Head of caudate nucleus (tissue), 42 donors: ENCODE measurements at regions of chr6 and their contacts with region 1.

Region 1: DNA sequence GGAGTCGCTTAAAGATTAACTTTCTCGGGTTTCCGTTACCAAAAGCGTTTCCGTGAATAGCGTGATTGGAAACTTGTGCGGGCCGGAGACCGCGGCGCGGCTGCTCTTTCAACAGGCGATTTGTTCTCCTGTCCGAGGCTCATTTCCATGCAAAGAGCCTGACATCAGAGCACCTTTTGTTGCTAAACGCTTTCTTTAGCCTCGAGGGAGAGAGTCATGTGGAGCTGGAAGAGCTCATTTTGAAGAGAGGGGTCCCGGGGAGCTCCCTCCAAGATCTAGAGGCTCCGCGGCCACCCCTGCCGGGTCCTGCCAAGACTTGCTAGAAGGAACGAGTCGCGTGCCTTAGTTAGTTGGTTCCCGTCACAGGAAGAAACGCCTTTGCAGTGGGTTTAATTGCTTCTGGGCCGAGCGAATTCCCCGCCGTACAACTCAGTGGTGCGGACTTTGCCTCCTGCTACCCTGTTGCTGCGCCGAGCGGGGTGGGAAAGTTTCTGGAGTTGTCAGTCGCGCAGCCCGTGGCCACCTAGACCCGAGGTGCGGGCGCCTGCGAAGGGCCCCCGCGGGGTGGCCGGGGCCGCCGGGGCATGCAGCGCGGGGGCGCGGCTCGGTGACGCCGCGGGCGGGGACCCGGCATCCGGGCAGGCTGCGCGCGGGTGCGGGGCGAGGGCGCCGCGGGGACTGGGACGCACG is at the start of gene SASH1:
- DNase-seq: peak; percentile 51 to 90 (median 77)

Region 2: DNA sequence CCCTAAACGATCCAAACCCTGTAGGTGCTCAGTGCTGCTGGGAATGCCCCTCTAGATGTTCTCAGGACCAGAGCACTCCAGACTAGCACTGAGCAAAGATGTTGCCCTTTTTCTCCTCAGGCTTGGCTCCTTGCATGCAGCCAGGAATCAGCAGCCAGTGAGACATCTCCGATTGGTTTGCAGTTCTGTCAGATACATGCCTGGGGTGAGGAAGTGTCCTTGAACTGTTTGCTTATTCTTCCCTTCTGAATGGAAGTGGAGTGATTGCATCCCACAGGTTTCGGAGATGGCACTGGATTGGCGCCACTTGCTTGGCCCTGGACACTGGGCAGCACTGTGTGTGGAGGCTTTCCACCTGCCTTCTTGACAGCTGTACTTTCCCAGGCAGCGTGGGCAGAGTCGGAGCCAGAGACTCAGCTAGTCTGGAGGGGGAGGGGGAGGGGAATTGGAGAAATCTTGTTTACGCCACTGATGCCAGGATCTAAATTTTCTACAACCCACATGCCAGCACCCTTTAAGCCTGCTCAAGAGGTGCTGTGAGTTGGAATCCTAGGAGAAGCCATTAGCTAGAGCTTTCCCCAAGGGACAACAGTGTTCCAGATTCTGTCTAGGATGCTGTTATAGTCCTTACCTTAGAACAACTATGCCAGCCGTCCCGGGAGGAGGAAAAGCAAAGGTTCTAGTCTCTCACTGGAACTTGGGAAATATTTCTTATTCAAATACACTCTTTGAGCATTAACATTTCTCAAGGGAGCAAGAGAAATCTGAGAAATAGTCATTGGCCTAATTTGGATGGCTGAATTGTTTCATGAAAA is 49.1 kb before region 1 on chr6:
- intact Hi-C with region 1: loop called (anchors 10 kb)
- DNase-seq: peak in 41 of 42 donors; percentile 10 to 68 (median 41)

Region 3: GRCh38 chr6:148414836-148415235 is 72.3 kb after region 1 on chr6:
- intact Hi-C with region 1: no loop called
- DNase-seq: no peak

Region 4: DNA sequence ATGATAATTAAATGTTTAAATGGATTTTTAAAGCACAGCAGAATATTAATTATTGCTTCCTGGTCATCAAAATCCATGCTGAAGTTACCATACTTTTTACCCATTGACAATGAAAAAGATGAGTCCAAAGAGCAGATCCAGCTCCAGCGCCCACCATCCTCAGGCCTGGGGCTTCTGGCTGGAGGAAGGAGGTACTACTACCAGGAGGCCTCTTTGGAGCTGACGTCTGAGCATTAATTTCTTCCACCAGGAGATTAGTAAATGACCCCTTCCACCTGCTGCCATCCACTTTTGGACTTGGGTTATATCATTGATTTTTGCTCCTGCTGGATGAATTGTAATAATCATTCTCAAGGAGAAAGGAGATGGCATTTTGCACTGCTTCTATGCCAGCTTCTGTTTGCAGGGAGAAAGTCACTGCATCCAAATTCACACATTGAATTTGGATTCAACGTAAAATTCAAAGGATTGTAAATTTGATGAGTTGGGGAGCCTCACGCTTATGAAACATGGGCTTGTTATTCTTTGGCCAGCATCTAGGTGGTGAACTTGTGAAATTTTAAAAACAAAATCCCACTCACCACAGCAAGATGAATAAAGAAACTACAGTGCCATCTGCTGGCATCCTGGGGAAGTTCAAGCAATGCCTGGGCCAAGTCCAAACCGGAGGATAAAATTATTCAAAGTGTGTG is 122.0 kb after region 1 on chr6:
- intact Hi-C with region 1: loop called (anchors 5 kb)
- DNase-seq: peak; percentile 31 to 93 (median 78)

Region 5: DNA sequence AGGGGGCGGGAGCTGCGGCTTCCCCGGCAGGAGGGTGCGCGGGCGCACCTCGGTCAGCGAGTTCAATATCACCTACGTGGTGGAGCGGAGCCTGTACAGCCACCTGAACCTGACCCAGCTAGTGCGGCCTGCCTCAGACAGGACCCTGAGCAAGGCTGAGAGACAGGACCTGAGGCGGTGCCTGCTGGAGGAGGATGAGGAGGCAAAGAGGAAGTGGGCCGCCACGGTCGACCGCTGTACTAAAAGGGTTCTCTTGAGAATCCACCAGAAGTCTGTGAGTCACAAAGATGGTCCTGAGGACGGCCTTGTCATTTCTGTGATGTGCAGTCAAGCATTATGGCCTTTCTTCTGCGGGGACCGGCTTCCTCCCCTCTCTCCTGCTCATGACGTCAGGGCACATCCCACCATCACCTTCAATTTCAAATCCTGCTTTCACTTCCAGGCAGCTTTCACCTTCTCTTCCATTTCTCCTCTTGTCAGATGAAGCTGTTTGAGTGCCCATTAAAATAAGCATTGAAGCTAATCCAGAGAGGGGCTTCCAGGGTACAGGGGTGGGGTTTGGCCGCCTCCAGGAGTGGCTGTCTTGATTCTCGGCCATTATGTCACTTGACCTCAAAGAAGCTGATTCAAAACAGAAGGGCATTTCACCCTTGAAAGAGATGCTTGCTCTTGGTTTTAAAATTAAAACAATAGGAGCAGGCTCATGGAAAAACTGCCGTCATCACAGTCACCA is 177.8 kb after region 1 on chr6:
- intact Hi-C with region 1: loop called (anchors 10 kb)
- DNase-seq: peak in 1 of 42 donors; percentile 45